ENCODE measurements at regions of chr3 and their contacts with region 1.

Region 1: DNA sequence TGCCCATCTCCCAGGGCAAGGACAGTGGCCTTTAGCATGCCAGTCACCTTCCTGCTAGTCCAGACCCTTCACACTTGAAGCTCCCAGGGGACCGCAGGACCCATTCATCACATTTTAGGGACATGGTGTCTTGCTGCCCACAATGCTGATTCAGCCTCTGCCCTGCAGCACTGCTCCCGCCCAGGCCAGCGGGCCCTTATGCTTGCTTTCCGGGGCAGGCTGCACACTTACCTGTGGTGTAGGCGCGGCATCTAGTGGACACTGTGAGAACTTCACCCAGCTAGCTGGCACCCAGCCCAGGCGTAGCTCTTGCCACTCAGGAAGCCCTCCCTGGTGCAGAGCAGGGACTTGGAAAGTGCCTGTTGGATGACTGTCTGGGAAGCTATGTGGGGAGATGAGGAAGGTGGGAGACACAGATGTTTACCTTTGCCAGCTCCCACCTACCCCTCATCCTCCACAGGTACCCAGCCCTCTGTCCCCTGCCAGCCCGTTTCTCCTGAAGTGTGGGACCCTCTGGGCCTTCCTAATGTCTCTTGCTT is 26.2 kb upstream of the NR2C2 start:
- DNase-seq: peak; percentile 93

Region 2: DNA sequence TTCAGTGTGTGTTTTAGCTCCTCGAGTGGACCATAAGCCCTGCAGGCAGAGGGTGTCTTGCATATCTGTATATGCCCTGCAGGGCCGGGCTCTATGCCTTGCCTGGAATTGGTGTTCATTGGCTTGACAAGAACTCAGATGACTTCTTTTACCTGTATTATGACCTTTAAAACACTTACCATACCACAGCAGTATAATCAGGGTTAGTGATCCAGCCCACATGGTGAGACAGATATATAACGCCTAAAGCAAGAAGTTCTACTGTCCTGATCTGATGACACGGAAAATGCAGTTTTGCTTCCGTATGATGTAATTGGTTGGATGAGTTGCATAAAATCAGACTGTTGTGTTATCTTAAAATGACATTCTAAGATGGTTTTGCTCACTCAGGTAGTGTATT is 260.2 kb before region 1 on chr3:
- in situ Hi-C with region 1: loop called (anchors 10 kb)
- DNase-seq: no peak

Region 3: GRCh38 chr3:14791343-14791945 is 129.7 kb before region 1 on chr3:
- in situ Hi-C with region 1: loop called (anchors 10 kb)
- DNase-seq: peak; percentile 56